ENCODE measurements at regions of chr21 and their contacts with region 1.

Region 1: GRCh38 chr21:44939532-44940115 is at the start of gene SLX9:
- DNase-seq: peak; percentile 73
- ATAC-seq: peak; percentile 97
- H3K4me3 ChIP-seq: peak within 1 kb of the TSS; percentile 98
- H3K27ac ChIP-seq: peak within 1 kb of the TSS; percentile 89
- H3K4me1 ChIP-seq: peaks cover 7% of the 10 kb centered on the region; the same call in 1 of the 2 replicates
- H3K27me3 ChIP-seq: peaks cover 4% of the 10 kb centered on the region; the same call in 1 of the 2 replicates
- CTCF ChIP-seq: no peak
- POLR2A ChIP-seq: no peak
- RAD21 ChIP-seq: no peak
- total RNA-seq, gene SLX9: 10.4 and 17.5 TPM in 2 replicates

Region 2: DNA sequence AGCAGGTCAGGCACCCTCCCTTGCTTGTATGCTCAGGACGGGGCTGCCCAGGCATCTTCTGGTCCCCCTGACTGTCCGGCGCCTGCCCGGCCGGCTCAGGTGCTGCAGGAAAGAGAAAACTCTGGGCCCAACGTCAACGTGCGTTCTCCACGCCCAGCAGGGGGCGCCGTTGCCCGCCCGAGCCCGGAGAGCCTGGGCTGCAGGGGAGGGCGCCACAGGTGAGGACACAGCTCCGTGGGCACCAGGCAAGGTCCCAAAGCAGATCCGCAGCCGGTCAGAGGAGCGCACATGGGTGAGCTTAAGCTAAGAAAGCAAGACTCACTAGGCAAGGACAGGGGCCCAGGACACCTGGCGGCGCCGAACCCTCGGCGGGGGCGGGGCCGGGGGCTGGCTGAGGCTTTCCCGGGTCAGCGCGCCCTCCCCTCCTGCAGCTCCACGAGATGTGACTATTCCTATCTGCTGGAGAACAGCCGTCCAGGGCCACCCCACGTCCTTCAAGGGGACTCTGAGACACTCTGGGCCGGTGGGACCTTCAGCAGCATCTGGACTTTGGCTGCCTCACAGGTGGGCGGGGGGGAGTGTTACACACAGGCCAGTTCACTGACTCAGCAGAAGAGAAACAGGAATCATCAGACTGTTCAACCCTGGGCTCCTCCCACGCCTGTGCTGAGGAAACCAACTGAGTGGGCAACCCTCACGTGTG is 429.0 kb before region 1 on chr21:
- CTCF ChIA-PET with region 1: no interaction called
- POLR2A ChIA-PET with region 1: no interaction called
- dilution Hi-C with region 1: no loop called
- in situ Hi-C with region 1: loop called (anchors 25 kb)
- intact Hi-C with region 1: no loop called
- DNase-seq: no peak
- ATAC-seq: peak; percentile 77
- H3K4me3 ChIP-seq: no peak overlapping the region
- H3K27ac ChIP-seq: no peak overlapping the region
- H3K4me1 ChIP-seq: no peaks in the 10 kb centered on the region
- H3K27me3 ChIP-seq: peaks cover 21% of the 10 kb centered on the region
- CTCF ChIP-seq: peak; percentile 52
- POLR2A ChIP-seq: no peak
- RAD21 ChIP-seq: peak; percentile 52

Region 3: DNA sequence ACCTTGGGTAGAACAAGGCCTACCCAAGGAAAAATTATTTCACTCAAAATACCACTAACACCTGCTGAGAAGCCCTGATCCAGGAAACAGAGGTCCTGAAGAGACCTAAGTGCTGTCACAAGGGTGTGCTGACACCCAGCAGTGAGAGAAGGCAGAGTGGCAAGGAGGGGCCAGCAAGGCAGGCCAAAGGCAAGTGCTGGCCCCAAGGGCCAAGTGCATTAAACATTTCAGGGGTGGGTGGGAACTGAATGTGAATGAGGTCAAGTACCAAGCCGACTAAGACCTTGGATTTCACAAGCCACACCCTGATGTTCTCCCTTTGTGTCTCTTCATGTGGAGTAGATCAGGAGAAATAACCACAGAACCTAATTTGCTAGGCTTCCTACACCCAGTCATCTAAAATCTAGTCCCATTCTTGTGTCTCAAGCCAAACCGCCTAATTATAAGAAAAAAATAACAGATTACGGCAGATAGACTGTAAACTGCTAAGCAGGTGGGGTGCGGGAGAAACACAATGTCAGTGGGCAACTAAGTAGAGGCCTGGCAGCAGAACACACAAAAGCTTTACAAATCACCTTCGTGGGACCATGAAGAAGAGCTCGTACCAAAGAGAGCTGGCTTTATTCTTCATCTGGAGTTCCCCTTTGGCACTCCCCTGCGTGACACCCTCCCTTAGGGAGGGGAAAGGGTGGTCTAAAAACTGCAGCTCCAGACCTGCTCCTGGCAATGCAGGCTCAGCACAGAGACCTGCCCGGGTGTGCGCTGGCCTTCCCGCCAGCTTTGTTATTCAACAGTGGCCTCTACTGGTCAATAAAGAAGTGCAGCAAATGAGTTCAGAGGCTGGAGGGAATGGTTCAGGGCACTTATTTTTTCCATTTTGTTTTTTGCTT is 146.7 kb before region 1 on chr21:
- CTCF ChIA-PET with region 1: no interaction called
- POLR2A ChIA-PET with region 1: no interaction called
- dilution Hi-C with region 1: no loop called
- in situ Hi-C with region 1: loop called (anchors 5 kb)
- intact Hi-C with region 1: no loop called
- DNase-seq: peak; percentile 58
- ATAC-seq: peak; percentile 98
- H3K4me3 ChIP-seq: no peak overlapping the region
- H3K27ac ChIP-seq: no peak overlapping the region
- H3K4me1 ChIP-seq: peaks cover 3% of the 10 kb centered on the region; the same call in 1 of the 2 replicates
- H3K27me3 ChIP-seq: no peaks in the 10 kb centered on the region
- CTCF ChIP-seq: peak; percentile 73
- POLR2A ChIP-seq: no peak
- RAD21 ChIP-seq: peak; percentile 73

Region 4: GRCh38 chr21:45277101-45278045 is 337.7 kb after region 1 on chr21:
- CTCF ChIA-PET with region 1: no interaction called
- POLR2A ChIA-PET with region 1: no interaction called
- dilution Hi-C with region 1: no loop called
- in situ Hi-C with region 1: no loop called
- intact Hi-C with region 1: loop called (anchors 5 kb)
- DNase-seq: no peak
- ATAC-seq: no peak
- H3K4me3 ChIP-seq: no peak overlapping the region
- H3K27ac ChIP-seq: no peak overlapping the region
- H3K4me1 ChIP-seq: no peaks in the 10 kb centered on the region
- H3K27me3 ChIP-seq: no peaks in the 10 kb centered on the region
- CTCF ChIP-seq: no peak
- POLR2A ChIP-seq: no peak
- RAD21 ChIP-seq: no peak